T-cell (primary cell): ENCODE measurements at regions of chr11 and their contacts with region 1.

Region 1: GRCh38 chr11:47285969-47286770 is 16.2 kb downstream of the MADD start:
- DNase-seq: no peak
- ATAC-seq: no peak
- H3K4me3 ChIP-seq: no peak overlapping the region
- H3K4me3 Mint-ChIP-seq: no peak overlapping the region
- H3K27ac ChIP-seq: no peak overlapping the region
- H3K27ac Mint-ChIP-seq: no peak overlapping the region
- H3K4me1 ChIP-seq: no peaks in the 10 kb centered on the region
- H3K4me1 Mint-ChIP-seq: no peaks in the 10 kb centered on the region
- H3K27me3 ChIP-seq: no peaks in the 10 kb centered on the region
- H3K27me3 Mint-ChIP-seq: no peaks in the 10 kb centered on the region

Region 2: GRCh38 chr11:47111318-47111804 is 174.8 kb before region 1 on chr11:
- CTCF ChIA-PET with region 1: no interaction called
- POLR2A ChIA-PET with region 1: no interaction called
- DNase-seq: no peak
- ATAC-seq: no peak
- H3K4me3 ChIP-seq: no peak overlapping the region
- H3K4me3 Mint-ChIP-seq: no peak overlapping the region
- H3K27ac ChIP-seq: no peak overlapping the region
- H3K27ac Mint-ChIP-seq: no peak overlapping the region
- H3K4me1 ChIP-seq: no peaks in the 10 kb centered on the region
- H3K4me1 Mint-ChIP-seq: no peaks in the 10 kb centered on the region
- H3K27me3 ChIP-seq: no peaks in the 10 kb centered on the region
- H3K27me3 Mint-ChIP-seq: no peaks in the 10 kb centered on the region

Region 3: DNA sequence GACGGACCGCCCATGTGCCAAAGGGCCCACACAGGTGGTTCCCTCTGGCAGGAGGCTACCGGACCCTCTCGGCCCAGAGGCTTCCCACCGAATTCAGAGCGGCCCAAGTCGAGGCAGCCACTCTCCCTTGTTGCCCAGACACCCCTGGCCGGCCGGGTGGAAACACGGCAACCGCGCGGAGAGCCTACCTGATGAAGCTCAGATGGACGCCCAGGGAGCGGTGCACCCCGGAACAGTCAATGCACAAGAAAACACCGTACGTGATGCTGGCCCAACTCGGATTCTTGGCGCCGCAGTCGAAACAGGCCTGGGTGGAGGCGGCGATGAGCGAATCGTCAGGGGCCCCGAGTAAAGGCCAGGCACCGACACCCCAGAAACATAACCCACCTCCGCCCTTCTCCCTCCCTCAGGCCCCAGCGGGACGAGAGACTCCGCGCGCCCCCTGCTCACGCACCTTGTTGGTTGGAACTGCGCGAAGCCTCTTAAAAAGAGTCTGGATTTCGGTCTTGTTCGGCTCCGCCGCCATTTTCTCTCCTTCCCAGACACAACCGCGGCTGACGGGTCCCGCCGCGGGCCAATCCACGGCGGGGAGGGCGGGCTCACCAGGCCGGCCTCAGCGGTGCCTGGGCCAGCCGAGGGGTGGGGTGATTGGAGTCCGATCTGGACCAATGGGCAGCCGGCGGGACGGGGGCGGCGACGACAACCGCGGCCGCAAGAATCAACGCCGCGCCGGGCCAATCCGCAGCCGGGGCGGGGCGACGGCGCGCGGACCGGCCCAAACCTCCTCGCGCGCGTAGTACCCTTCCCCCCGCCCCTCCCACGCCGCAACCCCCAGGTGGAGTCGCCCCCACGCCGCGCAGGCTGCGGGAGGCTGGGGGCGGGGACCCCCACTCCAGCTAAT is 109.6 kb before region 1 on chr11 and contains the start of gene ARFGAP2:
- CTCF ChIA-PET with region 1: no interaction called
- POLR2A ChIA-PET with region 1: interaction called in 1 of 2 experiments, 10 read pairs
- DNase-seq: peak; percentile 86 to 98 (median 95)
- ATAC-seq: peak; percentile 93 to 95 (median 94)
- H3K4me3 ChIP-seq: peak within 1 kb of the TSS; percentile 96 to 100
- H3K4me3 Mint-ChIP-seq: peak within 1 kb of the TSS; percentile 95 to 98 (median 96)
- H3K27ac ChIP-seq: peak within 1 kb of the TSS; percentile 98
- H3K27ac Mint-ChIP-seq: peak within 1 kb of the TSS; percentile 99 to 100
- H3K4me1 ChIP-seq: peaks cover 16 to 58% of the 10 kb centered on the region in 2 experiments
- H3K4me1 Mint-ChIP-seq: peaks cover 47 to 56% (median 49%) of the 10 kb centered on the region in 3 donors
- H3K27me3 ChIP-seq: peaks cover 0 to 5% of the 10 kb centered on the region in 2 experiments
- H3K27me3 Mint-ChIP-seq: peaks cover 0 to 2% of the 10 kb centered on the region in 2 donors
- total RNA-seq, gene ARFGAP2: 145 to 188 (median 160) TPM

Region 4: GRCh38 chr11:47407746-47408590 is 121.8 kb after region 1 on chr11 and contains the start of gene SLC39A13:
- CTCF ChIA-PET with region 1: no interaction called
- POLR2A ChIA-PET with region 1: no interaction called
- DNase-seq: peak; percentile 71 to 93 (median 83)
- ATAC-seq: peak; percentile 87 to 92 (median 89)
- H3K4me3 ChIP-seq: peak within 1 kb of the TSS; percentile 66 to 69
- H3K4me3 Mint-ChIP-seq: peak within 1 kb of the TSS; percentile 88 to 96 (median 90)
- H3K27ac ChIP-seq: peak within 1 kb of the TSS; percentile 75
- H3K27ac Mint-ChIP-seq: peak within 1 kb of the TSS; percentile 94 to 95
- H3K4me1 ChIP-seq: peaks cover 7 to 35% of the 10 kb centered on the region in 2 experiments
- H3K4me1 Mint-ChIP-seq: peaks cover 24% of the 10 kb centered on the region in 3 donors
- H3K27me3 ChIP-seq: no peaks in the 10 kb centered on the region
- H3K27me3 Mint-ChIP-seq: no peaks in the 10 kb centered on the region
- total RNA-seq, gene SLC39A13: 45.6 to 67.0 (median 65.2) TPM